GM12878 (cell line): ENCODE measurements at regions of chr7 and their contacts with region 1.

Region 1: GRCh38 chr7:118590107-118590506 is 365.6 kb downstream of the ANKRD7 start:
- DNase-seq: no peak
- ATAC-seq: peak; percentile 89
- H3K4me3 ChIP-seq: no peak overlapping the region
- H3K27ac ChIP-seq: no peak overlapping the region
- H3K4me1 ChIP-seq: no peaks in the 10 kb centered on the region
- H3K27me3 ChIP-seq: no peaks in the 10 kb centered on the region
- CTCF ChIP-seq: peak; percentile 40 to 41 (median 41); a peak in 5 of 6 replicates
- EP300 ChIP-seq: no peak
- POLR2A ChIP-seq: no peak
- RAD21 ChIP-seq: peak; percentile 60

Region 2: GRCh38 chr7:118183786-118184564 is 406.1 kb before region 1 on chr7 and contains the start of gene LSM8:
- CTCF ChIA-PET with region 1: no interaction called
- POLR2A ChIA-PET with region 1: no interaction called
- RAD21 ChIA-PET with region 1: no interaction called
- SMC1A ChIA-PET with region 1: no interaction called
- in situ Hi-C with region 1: no loop called
- intact Hi-C with region 1: no loop called
- DNase-seq: peak; percentile 99
- ATAC-seq: peak; percentile 96
- H3K4me3 ChIP-seq: peak within 1 kb of the TSS; percentile 86
- H3K27ac ChIP-seq: peak within 1 kb of the TSS; percentile 93
- H3K4me1 ChIP-seq: no peaks in the 10 kb centered on the region
- H3K27me3 ChIP-seq: no peaks in the 10 kb centered on the region
- CTCF ChIP-seq: no peak
- EP300 ChIP-seq: 0 out of 4 replicates have a peak, but pooled peaks of 1 of the 2 experiments have one; percentile 1
- POLR2A ChIP-seq: peak; percentile 98
- RAD21 ChIP-seq: no peak
- polyA plus RNA-seq, gene LSM8: 127 to 140 TPM

Region 3: DNA sequence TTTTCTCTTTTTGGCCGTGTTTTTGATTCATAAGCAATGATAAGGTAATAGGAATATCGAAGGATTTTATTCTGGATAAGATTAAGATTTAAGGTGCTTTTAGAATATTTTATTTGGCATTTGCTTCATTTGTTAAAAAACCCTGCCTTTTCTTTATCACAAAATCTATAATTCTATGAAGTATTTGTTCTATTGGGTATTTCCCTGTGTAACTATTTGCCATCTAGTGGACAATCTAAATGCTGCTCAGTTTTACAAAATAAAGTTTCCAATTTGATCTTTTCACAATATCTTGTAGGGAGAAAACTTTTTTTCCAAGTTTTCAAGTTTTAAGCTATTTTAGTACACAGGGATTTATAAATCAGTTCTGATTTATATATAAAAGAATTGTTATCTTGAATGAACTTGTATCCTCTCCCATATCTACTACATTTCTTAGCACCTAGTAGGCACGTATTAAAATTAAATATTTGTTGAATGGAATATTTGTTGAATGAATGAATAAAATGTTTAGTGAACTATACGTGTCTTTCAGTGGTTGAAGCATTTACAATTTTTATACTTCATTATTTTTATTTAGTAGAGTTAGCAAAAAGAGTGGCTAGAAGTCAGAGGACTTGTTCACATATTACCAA is 339.1 kb before region 1 on chr7:
- CTCF ChIA-PET with region 1: no interaction called
- POLR2A ChIA-PET with region 1: no interaction called
- RAD21 ChIA-PET with region 1: no interaction called
- SMC1A ChIA-PET with region 1: no interaction called
- in situ Hi-C with region 1: loop called (anchors 10 kb)
- intact Hi-C with region 1: no loop called
- DNase-seq: no peak
- ATAC-seq: no peak
- H3K4me3 ChIP-seq: no peak overlapping the region
- H3K27ac ChIP-seq: no peak overlapping the region
- H3K4me1 ChIP-seq: no peaks in the 10 kb centered on the region
- H3K27me3 ChIP-seq: no peaks in the 10 kb centered on the region
- CTCF ChIP-seq: peak in 2 of 3 experiments; percentile 7 to 14; a peak in 1 of 6 replicates
- EP300 ChIP-seq: no peak
- POLR2A ChIP-seq: no peak
- RAD21 ChIP-seq: no peak

Region 4: DNA sequence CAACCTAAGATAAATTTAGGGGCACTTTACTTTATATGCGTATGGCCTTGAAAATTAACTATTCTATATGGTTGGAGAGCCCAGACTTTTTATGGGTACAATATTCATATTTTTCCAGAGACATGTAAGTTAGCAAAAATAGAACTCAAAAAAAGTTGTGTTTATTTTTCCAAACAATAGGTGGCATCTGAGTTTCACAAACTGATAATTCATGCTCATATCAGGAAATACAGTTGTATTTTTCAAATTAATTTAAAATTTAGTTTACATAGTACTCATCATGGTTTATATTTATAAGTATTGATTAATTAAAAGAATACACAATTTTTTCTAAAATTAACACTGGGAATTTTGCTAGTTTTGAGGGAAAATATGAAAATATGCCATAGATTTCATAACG is 331.0 kb before region 1 on chr7:
- CTCF ChIA-PET with region 1: interaction called, 3 read pairs
- POLR2A ChIA-PET with region 1: no interaction called
- RAD21 ChIA-PET with region 1: no interaction called
- SMC1A ChIA-PET with region 1: no interaction called
- in situ Hi-C with region 1: loop called (anchors 10 kb)
- intact Hi-C with region 1: loop called (anchors 1 kb)
- DNase-seq: no peak
- ATAC-seq: no peak
- H3K4me3 ChIP-seq: no peak overlapping the region
- H3K27ac ChIP-seq: no peak overlapping the region
- H3K4me1 ChIP-seq: no peaks in the 10 kb centered on the region
- H3K27me3 ChIP-seq: no peaks in the 10 kb centered on the region
- CTCF ChIP-seq: no peak; a peak in 1 of 6 replicates
- EP300 ChIP-seq: no peak
- POLR2A ChIP-seq: no peak
- RAD21 ChIP-seq: peak; percentile 51; the same call in 1 of the 2 replicates

Region 5: GRCh38 chr7:118352854-118353453 is 237.2 kb before region 1 on chr7:
- CTCF ChIA-PET with region 1: interaction called, 3 read pairs
- POLR2A ChIA-PET with region 1: no interaction called
- RAD21 ChIA-PET with region 1: no interaction called
- SMC1A ChIA-PET with region 1: interaction called, 3 read pairs
- in situ Hi-C with region 1: no loop called
- intact Hi-C with region 1: loop called (anchors 5 kb)
- DNase-seq: no peak
- ATAC-seq: peak; percentile 65
- H3K4me3 ChIP-seq: no peak overlapping the region
- H3K27ac ChIP-seq: no peak overlapping the region
- H3K4me1 ChIP-seq: no peaks in the 10 kb centered on the region
- H3K27me3 ChIP-seq: no peaks in the 10 kb centered on the region
- CTCF ChIP-seq: peak in 2 of 3 experiments; percentile 12 to 46; a peak in 2 of 6 replicates
- EP300 ChIP-seq: no peak
- POLR2A ChIP-seq: no peak
- RAD21 ChIP-seq: peak; percentile 59

Region 6: GRCh38 chr7:118573085-118573484 is 17.0 kb before region 1 on chr7:
- CTCF ChIA-PET with region 1: no interaction called
- POLR2A ChIA-PET with region 1: no interaction called
- RAD21 ChIA-PET with region 1: no interaction called
- SMC1A ChIA-PET with region 1: no interaction called
- in situ Hi-C with region 1: no loop called
- intact Hi-C with region 1: no loop called
- DNase-seq: no peak
- ATAC-seq: no peak; the same call in 2 of the 3 replicates
- H3K4me3 ChIP-seq: no peak overlapping the region
- H3K27ac ChIP-seq: no peak overlapping the region
- H3K4me1 ChIP-seq: no peaks in the 10 kb centered on the region
- H3K27me3 ChIP-seq: no peaks in the 10 kb centered on the region
- CTCF ChIP-seq: no peak
- EP300 ChIP-seq: no peak
- POLR2A ChIP-seq: no peak
- RAD21 ChIP-seq: no peak